Activated CD4-positive, alpha-beta T cell treated with anti-CD3 and anti-CD28 coated beads for 36 hours (primary cell): ENCODE measurements at regions of chr16 and their contacts with region 1.

Region 1: GRCh38 chr16:88803264-88803987 is at the start of gene CDT1:
- DNase-seq: peak; percentile 90
- ATAC-seq: peak; percentile 32
- H3K4me3 Mint-ChIP-seq: peak within 1 kb of the TSS; percentile 83
- H3K27ac Mint-ChIP-seq: peak within 1 kb of the TSS; percentile 94
- H3K4me1 Mint-ChIP-seq: peaks cover 24% of the 10 kb centered on the region
- H3K27me3 Mint-ChIP-seq: no peaks in the 10 kb centered on the region
- total RNA-seq, gene CDT1: 136 to 182 TPM

Region 2: DNA sequence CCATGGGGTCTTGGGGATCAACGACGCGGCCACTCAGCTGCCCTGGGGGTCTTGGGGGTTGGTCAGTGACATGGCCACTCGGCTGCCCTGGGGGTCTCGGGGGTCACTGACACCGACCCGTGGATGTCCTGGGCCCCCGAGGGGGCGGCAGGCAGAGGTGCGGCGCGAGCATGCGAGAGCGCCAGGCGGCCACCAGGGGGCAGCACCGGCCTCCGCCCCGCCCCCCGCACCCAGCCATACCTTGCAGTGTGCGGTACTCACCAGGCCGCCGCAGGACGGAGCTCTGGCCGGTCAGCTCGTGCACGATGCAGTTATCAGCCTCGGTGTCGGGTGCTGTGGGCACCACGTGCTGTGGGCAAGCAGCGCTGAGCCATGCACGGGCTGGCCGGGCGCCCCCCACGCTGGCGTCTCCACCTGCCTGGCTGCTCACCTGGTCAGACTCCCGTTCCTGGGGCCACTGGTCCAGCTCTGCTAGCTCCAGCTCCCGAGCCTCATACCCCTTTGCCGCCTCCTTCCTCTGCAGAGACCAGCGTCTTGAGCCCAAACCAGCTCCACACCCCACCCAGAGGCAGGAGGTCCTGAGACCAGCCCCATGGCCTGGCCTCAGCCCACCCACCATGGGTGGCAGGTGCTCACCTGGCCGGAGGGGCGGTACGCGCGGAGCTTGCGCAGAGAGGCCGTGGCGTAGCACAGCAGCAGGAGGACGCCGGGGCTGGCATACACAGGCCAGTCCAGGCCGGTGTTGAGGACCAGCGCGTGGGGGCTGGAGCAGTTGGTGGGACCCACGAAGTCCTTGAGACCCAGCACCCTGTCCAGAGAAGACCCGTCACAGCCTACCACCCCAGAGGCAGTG is 65.9 kb before region 1 on chr16:
- CTCF ChIA-PET with region 1: interaction called, 11 read pairs
- POLR2A ChIA-PET with region 1: no interaction called
- intact Hi-C with region 1: loop called (anchors 1 to 5 kb)
- DNase-seq: peak; percentile 89
- ATAC-seq: peak; percentile 91
- H3K4me3 Mint-ChIP-seq: no peak overlapping the region
- H3K27ac Mint-ChIP-seq: no peak overlapping the region
- H3K4me1 Mint-ChIP-seq: no peaks in the 10 kb centered on the region
- H3K27me3 Mint-ChIP-seq: no peaks in the 10 kb centered on the region

Region 3: GRCh38 chr16:88920618-88921590 is 117.5 kb after region 1 on chr16:
- CTCF ChIA-PET with region 1: no interaction called
- POLR2A ChIA-PET with region 1: no interaction called
- intact Hi-C with region 1: no loop called
- DNase-seq: peak; percentile 63
- ATAC-seq: peak; percentile 54
- H3K4me3 Mint-ChIP-seq: peak overlapping the region; percentile 21
- H3K27ac Mint-ChIP-seq: no peak overlapping the region
- H3K4me1 Mint-ChIP-seq: peaks cover 8% of the 10 kb centered on the region
- H3K27me3 Mint-ChIP-seq: peaks cover 2% of the 10 kb centered on the region